ENCODE measurements at regions of chr3 and their contacts with region 1.

Region 1: DNA sequence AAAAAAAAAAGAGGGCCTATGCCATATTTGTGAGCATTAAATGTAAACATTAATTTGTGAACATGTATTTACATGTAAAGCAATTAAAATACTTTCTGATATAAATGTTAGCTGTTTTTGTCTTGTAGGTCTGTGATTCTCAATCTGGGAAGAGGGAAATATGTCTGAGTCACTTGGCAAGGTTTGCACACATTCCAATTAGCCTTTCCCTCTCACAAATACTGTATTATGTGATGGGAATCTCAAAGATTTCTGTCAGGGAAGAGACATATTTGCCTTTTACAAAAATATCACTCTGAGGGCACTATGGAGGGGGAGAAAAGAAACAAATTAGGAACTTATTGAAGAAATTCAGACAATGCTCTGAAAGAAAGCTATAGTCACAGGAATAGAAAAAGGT is 483.6 kb downstream of the GBE1 start:
- DNase-seq: no peak
- H3K4me3 ChIP-seq: no peak overlapping the region
- H3K27ac ChIP-seq: no peak overlapping the region
- H3K4me1 ChIP-seq: no peaks in the 10 kb centered on the region
- CTCF ChIP-seq: no peak

Region 2: DNA sequence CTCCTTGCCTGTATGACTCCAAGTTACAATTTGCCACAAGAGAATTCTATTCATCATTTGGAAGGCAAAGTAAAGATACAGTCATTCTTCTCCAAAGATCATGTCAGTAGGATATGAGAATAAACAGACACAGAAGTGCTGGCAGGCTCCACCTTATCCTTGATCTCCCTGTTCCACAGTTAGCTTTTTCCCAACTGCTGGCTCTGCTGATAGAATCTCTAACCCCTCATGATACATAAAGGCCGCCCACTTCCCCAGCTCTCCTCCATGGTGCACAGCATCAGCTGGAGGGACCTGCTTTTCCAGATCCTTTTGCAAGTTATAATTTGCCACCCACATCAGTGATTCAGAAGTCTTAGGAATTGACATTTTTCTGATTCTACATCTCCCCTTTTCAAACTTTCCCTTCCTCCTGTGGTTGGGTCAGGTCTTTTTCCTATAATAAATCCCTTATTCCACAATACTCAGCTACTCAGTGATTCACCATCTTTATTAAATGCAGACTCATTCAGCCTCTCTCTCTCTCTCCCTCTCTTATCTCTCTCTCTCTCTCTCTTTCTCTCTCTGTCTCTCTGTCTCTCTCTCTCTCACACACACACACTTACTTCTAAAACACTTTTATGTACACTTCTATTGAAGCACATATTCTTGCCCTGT is 18.2 kb after region 1 on chr3:
- CTCF ChIA-PET with region 1: no interaction called
- POLR2A ChIA-PET with region 1: no interaction called
- intact Hi-C with region 1: loop called (anchors 1 kb)
- DNase-seq: no peak
- H3K4me3 ChIP-seq: no peak overlapping the region
- H3K27ac ChIP-seq: no peak overlapping the region
- H3K4me1 ChIP-seq: no peaks in the 10 kb centered on the region
- CTCF ChIP-seq: no peak

Region 3: DNA sequence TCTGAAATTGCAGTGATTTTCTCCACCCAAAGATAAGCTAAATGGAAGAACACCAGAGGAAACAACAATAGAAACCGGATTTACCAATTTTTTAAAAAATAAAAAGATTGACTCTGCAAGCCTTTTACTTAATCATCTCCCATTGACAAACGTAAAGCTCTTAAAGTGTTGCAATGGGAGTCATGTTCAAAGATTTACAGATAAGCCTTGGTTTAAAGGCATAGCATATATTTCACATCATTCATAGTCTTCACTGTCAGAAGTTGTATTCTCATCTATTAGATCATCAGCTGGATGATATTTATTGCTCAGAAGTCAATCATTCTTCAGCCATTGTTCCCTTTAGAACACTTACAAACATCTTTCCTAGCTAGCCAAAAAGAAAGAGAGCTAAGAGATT is 86.0 kb after region 1 on chr3:
- CTCF ChIA-PET with region 1: no interaction called
- POLR2A ChIA-PET with region 1: no interaction called
- intact Hi-C with region 1: no loop called
- DNase-seq: no peak
- H3K4me3 ChIP-seq: no peak overlapping the region
- H3K27ac ChIP-seq: no peak overlapping the region
- H3K4me1 ChIP-seq: no peaks in the 10 kb centered on the region
- CTCF ChIP-seq: no peak

Measured in OCI-LY7 (cell line).